Activated naive CD4-positive, alpha-beta T cell treated with anti-CD3 and anti-CD28 coated beads for 36 hours (primary cell): ENCODE measurements at regions of chr3 and their contacts with region 1.

Region 1: DNA sequence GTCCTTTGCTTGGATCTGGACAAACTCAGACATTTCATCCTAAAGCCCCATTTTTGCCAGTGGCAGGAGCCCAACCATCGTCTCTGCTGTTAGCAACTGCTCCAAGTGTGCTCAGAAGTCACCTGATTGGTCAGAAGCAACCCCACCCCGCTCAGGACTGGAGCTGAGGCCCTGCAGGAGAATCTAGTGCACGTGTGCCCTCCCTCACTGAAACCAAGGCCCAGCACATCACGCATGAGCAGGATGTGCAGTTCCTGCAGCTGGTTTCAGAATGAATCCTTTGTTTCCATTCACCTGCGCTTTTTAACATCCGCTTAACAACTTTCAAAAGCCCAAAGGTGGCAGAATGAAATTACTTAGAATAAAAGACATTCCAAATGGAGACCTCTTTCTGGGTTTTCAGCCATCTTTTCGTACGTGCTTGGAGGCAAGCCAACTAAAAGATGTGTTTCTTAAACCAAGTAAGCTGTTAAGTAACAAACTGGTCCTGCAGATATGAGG is 81.2 kb downstream of the SRGAP3 start:
- DNase-seq: peak; percentile 85
- H3K4me3 Mint-ChIP-seq: no peak overlapping the region
- H3K27ac Mint-ChIP-seq: peak overlapping the region; percentile 17
- H3K4me1 Mint-ChIP-seq: peaks cover 4% of the 10 kb centered on the region
- H3K27me3 Mint-ChIP-seq: no peaks in the 10 kb centered on the region

Region 2: GRCh38 chr3:8987645-8988383 is 180.5 kb before region 1 on chr3:
- CTCF ChIA-PET with region 1: no interaction called
- intact Hi-C with region 1: loop called (anchors 1 kb)
- DNase-seq: peak; percentile 84
- H3K4me3 Mint-ChIP-seq: no peak overlapping the region
- H3K27ac Mint-ChIP-seq: no peak overlapping the region
- H3K4me1 Mint-ChIP-seq: peaks cover 3% of the 10 kb centered on the region
- H3K27me3 Mint-ChIP-seq: no peaks in the 10 kb centered on the region

Region 3: GRCh38 chr3:9067352-9067975 is 100.8 kb before region 1 on chr3:
- CTCF ChIA-PET with region 1: no interaction called
- intact Hi-C with region 1: no loop called
- DNase-seq: peak; percentile 57
- H3K4me3 Mint-ChIP-seq: no peak overlapping the region
- H3K27ac Mint-ChIP-seq: no peak overlapping the region
- H3K4me1 Mint-ChIP-seq: no peaks in the 10 kb centered on the region
- H3K27me3 Mint-ChIP-seq: no peaks in the 10 kb centered on the region

Region 4: GRCh38 chr3:9080163-9080562 is 88.1 kb before region 1 on chr3:
- CTCF ChIA-PET with region 1: no interaction called
- intact Hi-C with region 1: loop called (anchors 5 kb)
- DNase-seq: peak; percentile 15
- H3K4me3 Mint-ChIP-seq: no peak overlapping the region
- H3K27ac Mint-ChIP-seq: no peak overlapping the region
- H3K4me1 Mint-ChIP-seq: peaks cover 8% of the 10 kb centered on the region
- H3K27me3 Mint-ChIP-seq: no peaks in the 10 kb centered on the region

Region 5: DNA sequence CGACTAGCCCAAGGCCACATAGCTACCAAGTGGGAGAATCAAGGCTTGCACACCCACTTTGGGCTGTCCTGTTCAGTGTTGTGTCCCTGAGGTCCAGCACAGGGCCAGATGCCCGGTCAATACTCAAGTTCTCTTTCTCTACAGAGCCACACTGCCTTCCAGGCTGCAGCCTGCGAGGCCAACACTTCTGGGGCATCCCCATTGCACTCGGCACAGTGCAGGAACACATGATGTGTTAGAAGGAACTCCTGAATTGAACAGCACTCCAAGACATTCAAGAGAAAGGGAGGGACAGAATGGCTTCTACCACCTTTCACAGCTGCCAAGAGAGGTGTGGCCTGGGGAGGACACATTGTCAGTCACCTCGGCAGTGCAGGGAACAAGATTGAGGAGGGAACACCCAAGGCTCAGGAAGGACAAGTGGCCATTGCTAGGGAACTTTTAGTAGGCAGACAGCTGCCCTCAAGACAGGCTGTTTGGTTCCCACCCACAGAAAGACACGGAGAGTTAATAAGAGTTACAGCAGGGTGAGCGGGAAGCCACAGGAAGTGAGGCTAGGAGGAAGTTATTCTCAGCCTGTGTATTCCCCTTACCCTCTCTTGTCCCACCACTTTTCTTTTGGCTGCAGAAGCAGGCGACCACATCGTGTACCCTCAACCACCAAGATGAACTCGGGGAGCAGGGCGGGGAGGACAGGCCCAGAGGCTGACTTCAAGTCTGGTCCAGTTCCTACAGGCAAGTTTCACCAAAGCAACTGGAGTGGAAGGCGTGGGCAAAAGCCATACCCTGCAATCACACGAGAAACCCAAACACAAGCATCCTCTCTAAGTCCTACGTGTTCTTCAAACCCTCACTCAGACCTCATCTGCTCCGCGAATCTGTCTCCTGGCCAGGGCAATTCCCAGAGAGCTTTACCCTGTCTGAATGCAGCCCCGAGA is 11.8 kb after region 1 on chr3:
- CTCF ChIA-PET with region 1: no interaction called
- intact Hi-C with region 1: loop called (anchors 1 kb)
- DNase-seq: peak; percentile 57
- H3K4me3 Mint-ChIP-seq: peak overlapping the region; percentile 58
- H3K27ac Mint-ChIP-seq: peak overlapping the region; percentile 54
- H3K4me1 Mint-ChIP-seq: peaks cover 19% of the 10 kb centered on the region
- H3K27me3 Mint-ChIP-seq: no peaks in the 10 kb centered on the region

Region 6: GRCh38 chr3:9224490-9224889 is 56.2 kb after region 1 on chr3:
- CTCF ChIA-PET with region 1: no interaction called
- intact Hi-C with region 1: loop called (anchors 1 kb)
- DNase-seq: peak; percentile 68
- H3K4me3 Mint-ChIP-seq: no peak overlapping the region
- H3K27ac Mint-ChIP-seq: peak overlapping the region; percentile 21
- H3K4me1 Mint-ChIP-seq: peaks cover 5% of the 10 kb centered on the region
- H3K27me3 Mint-ChIP-seq: no peaks in the 10 kb centered on the region

Region 7: GRCh38 chr3:9249273-9250192 is 81.2 kb after region 1 on chr3 and contains the start of gene SRGAP3:
- CTCF ChIA-PET with region 1: no interaction called
- intact Hi-C with region 1: loop called (anchors 2 kb)
- DNase-seq: peak; percentile 86
- H3K4me3 Mint-ChIP-seq: peak within 1 kb of the TSS; percentile 77
- H3K27ac Mint-ChIP-seq: peak within 1 kb of the TSS; percentile 28
- H3K4me1 Mint-ChIP-seq: peaks cover 17% of the 10 kb centered on the region
- H3K27me3 Mint-ChIP-seq: no peaks in the 10 kb centered on the region
- total RNA-seq, gene SRGAP3: 2.4 to 2.5 TPM

Region 8: GRCh38 chr3:9352917-9353752 is 184.8 kb after region 1 on chr3:
- CTCF ChIA-PET with region 1: no interaction called
- intact Hi-C with region 1: loop called (anchors 1 kb)
- DNase-seq: peak; percentile 78
- H3K4me3 Mint-ChIP-seq: no peak overlapping the region
- H3K27ac Mint-ChIP-seq: peak overlapping the region; percentile 57
- H3K4me1 Mint-ChIP-seq: peaks cover 22% of the 10 kb centered on the region
- H3K27me3 Mint-ChIP-seq: no peaks in the 10 kb centered on the region